ENCODE measurements at regions of chr19 and their contacts with region 1.

Region 1: GRCh38 chr19:10717356-10718204 is at the start of gene DNM2:
- DNase-seq: peak; percentile 100
- ATAC-seq: peak; percentile 84
- H3K4me3 ChIP-seq: peak within 1 kb of the TSS; percentile 75 to 96 (median 84)
- H3K4me3 Mint-ChIP-seq: peak within 1 kb of the TSS; percentile 95
- H3K27ac ChIP-seq: peak within 1 kb of the TSS; percentile 47 to 89
- H3K27ac Mint-ChIP-seq: peak within 1 kb of the TSS; percentile 92
- H3K4me1 ChIP-seq: peaks cover 18 to 49% of the 10 kb centered on the region in 2 donors
- H3K4me1 Mint-ChIP-seq: peaks cover 50% of the 10 kb centered on the region
- H3K27me3 ChIP-seq: no peaks in the 10 kb centered on the region
- H3K27me3 Mint-ChIP-seq: no peaks in the 10 kb centered on the region
- CTCF ChIP-seq: peak; percentile 77
- total RNA-seq, gene DNM2: 353 and 393 TPM in 2 replicates

Region 2: GRCh38 chr19:10653715-10654492 is 63.7 kb before region 1 on chr19 and contains the start of gene ILF3:
- CTCF ChIA-PET with region 1: no interaction called
- POLR2A ChIA-PET with region 1: no interaction called
- intact Hi-C with region 1: loop called (anchors 1 kb)
- DNase-seq: peak; percentile 100
- ATAC-seq: peak; percentile 80
- H3K4me3 ChIP-seq: peak within 1 kb of the TSS; percentile 67 to 100 (median 96)
- H3K4me3 Mint-ChIP-seq: peak within 1 kb of the TSS; percentile 98
- H3K27ac ChIP-seq: peak within 1 kb of the TSS; percentile 99 to 100
- H3K27ac Mint-ChIP-seq: peak within 1 kb of the TSS; percentile 100
- H3K4me1 ChIP-seq: peaks cover 28 to 35% of the 10 kb centered on the region in 2 donors
- H3K4me1 Mint-ChIP-seq: peaks cover 42% of the 10 kb centered on the region
- H3K27me3 ChIP-seq: no peaks in the 10 kb centered on the region
- H3K27me3 Mint-ChIP-seq: no peaks in the 10 kb centered on the region
- CTCF ChIP-seq: no peak
- total RNA-seq, gene ILF3: 359 and 378 TPM in 2 replicates

Region 3: GRCh38 chr19:10730923-10731322 is 13.3 kb after region 1 on chr19:
- CTCF ChIA-PET with region 1: interaction called, 11 read pairs
- POLR2A ChIA-PET with region 1: interaction called, 6 read pairs
- intact Hi-C with region 1: loop called (anchors 1 kb)
- DNase-seq: peak; percentile 48
- ATAC-seq: peak; percentile 23
- H3K4me3 ChIP-seq: no peak overlapping the region
- H3K4me3 Mint-ChIP-seq: peak overlapping the region; percentile 84
- H3K27ac ChIP-seq: peak overlapping the region; percentile 63 to 82
- H3K27ac Mint-ChIP-seq: peak overlapping the region; percentile 85
- H3K4me1 ChIP-seq: peaks cover 39 to 60% of the 10 kb centered on the region in 2 donors
- H3K4me1 Mint-ChIP-seq: peaks cover 52% of the 10 kb centered on the region
- H3K27me3 ChIP-seq: no peaks in the 10 kb centered on the region
- H3K27me3 Mint-ChIP-seq: no peaks in the 10 kb centered on the region
- CTCF ChIP-seq: no peak

Region 4: GRCh38 chr19:10780368-10780767 is 62.8 kb after region 1 on chr19:
- CTCF ChIA-PET with region 1: interaction called, 35 read pairs
- POLR2A ChIA-PET with region 1: interaction called, 12 read pairs
- intact Hi-C with region 1: loop called (anchors 2 kb)
- DNase-seq: no peak
- ATAC-seq: no peak
- H3K4me3 ChIP-seq: no peak overlapping the region
- H3K4me3 Mint-ChIP-seq: no peak overlapping the region
- H3K27ac ChIP-seq: peak overlapping the region in 1 of 2 donors; percentile 60
- H3K27ac Mint-ChIP-seq: peak overlapping the region; percentile 86
- H3K4me1 ChIP-seq: peaks cover 42 to 67% of the 10 kb centered on the region in 2 donors
- H3K4me1 Mint-ChIP-seq: peaks cover 54% of the 10 kb centered on the region
- H3K27me3 ChIP-seq: no peaks in the 10 kb centered on the region
- H3K27me3 Mint-ChIP-seq: no peaks in the 10 kb centered on the region
- CTCF ChIP-seq: no peak

Region 5: GRCh38 chr19:10835754-10836477 is 118.3 kb after region 1 on chr19 and contains the start of gene TMED1:
- CTCF ChIA-PET with region 1: interaction called, 30 read pairs
- POLR2A ChIA-PET with region 1: interaction called, 18 read pairs
- intact Hi-C with region 1: loop called (anchors 1 kb)
- DNase-seq: peak; percentile 97
- ATAC-seq: peak; percentile 85
- H3K4me3 ChIP-seq: peak within 1 kb of the TSS; percentile 64 to 97 (median 94)
- H3K4me3 Mint-ChIP-seq: peak within 1 kb of the TSS; percentile 96
- H3K27ac ChIP-seq: peak within 1 kb of the TSS; percentile 95 to 97
- H3K27ac Mint-ChIP-seq: peak within 1 kb of the TSS; percentile 100
- H3K4me1 ChIP-seq: peaks cover 7 to 17% of the 10 kb centered on the region in 2 donors
- H3K4me1 Mint-ChIP-seq: peaks cover 14% of the 10 kb centered on the region
- H3K27me3 ChIP-seq: no peaks in the 10 kb centered on the region
- H3K27me3 Mint-ChIP-seq: no peaks in the 10 kb centered on the region
- CTCF ChIP-seq: no peak
- total RNA-seq, gene TMED1: 13.1 and 14.7 TPM in 2 replicates

Region 6: GRCh38 chr19:10870955-10871603 is 153.5 kb after region 1 on chr19 and contains the start of gene CARM1:
- CTCF ChIA-PET with region 1: interaction called, 14 read pairs
- POLR2A ChIA-PET with region 1: interaction called, 4 read pairs
- intact Hi-C with region 1: loop called (anchors 1 kb)
- DNase-seq: peak; percentile 99
- ATAC-seq: peak; percentile 83
- H3K4me3 ChIP-seq: peak within 1 kb of the TSS; percentile 41 to 79 (median 67)
- H3K4me3 Mint-ChIP-seq: peak within 1 kb of the TSS; percentile 86
- H3K27ac ChIP-seq: peak within 1 kb of the TSS; percentile 75 to 79
- H3K27ac Mint-ChIP-seq: peak within 1 kb of the TSS; percentile 85
- H3K4me1 ChIP-seq: peaks cover 33 to 46% of the 10 kb centered on the region in 2 donors
- H3K4me1 Mint-ChIP-seq: peaks cover 43% of the 10 kb centered on the region
- H3K27me3 ChIP-seq: no peaks in the 10 kb centered on the region
- H3K27me3 Mint-ChIP-seq: no peaks in the 10 kb centered on the region
- CTCF ChIP-seq: peak; percentile 55
- total RNA-seq, gene CARM1: 29.4 and 33.0 TPM in 2 replicates

Measured in B cell (primary cell).